Mammary epithelial cell (primary cell): ENCODE measurements at regions of chr18 and their contacts with region 1.

Region 1: DNA sequence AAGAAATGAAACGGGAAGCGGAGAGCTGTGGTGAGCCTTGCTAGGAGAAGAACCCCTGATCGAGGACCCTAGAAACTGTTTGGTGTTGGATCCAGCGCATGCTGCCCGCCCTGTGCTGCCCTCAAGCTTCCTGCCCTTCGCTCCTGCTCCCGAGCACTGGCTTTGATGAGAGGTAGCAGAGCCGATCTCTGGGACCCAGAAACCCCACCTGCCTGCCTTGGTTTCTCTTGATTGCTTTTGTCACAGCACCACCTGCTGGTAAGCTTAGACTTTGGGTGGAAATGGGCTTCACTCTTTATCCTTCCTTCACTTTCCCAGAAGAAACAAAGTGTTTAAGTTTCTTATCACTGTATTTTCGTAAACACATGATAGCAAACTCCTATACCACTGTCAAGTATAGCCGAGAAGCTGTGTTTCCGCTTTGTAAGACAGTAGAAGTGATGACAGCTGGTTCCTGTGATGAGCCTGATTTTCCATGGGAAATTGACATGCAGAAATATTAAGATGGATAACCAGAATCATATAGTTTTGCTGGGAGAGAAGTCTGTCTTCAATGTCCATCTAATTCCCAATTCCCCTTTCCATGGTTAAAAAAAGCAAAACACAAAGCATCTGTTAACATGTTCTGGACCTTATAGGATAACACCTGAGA is 267.4 kb downstream of the PHLPP1 start:
- DNase-seq: peak; percentile 28
- H3K4me3 ChIP-seq: no peak overlapping the region
- H3K27ac ChIP-seq: no peak overlapping the region
- H3K4me1 ChIP-seq: no peaks in the 10 kb centered on the region
- H3K27me3 ChIP-seq: no peaks in the 10 kb centered on the region
- CTCF ChIP-seq: peak; percentile 65 to 79

Region 2: GRCh38 chr18:62186774-62187542 is 795.8 kb before region 1 on chr18 and contains the starts of genes PIGN and RELCH:
- CTCF ChIA-PET with region 1: no interaction called
- dilution Hi-C with region 1: no loop called
- in situ Hi-C with region 1: no loop called
- intact Hi-C with region 1: loop called (anchors 2 kb)
- DNase-seq: peak; percentile 99
- H3K4me3 ChIP-seq: peak within 1 kb of the TSS; percentile 73 to 98 (median 80)
- H3K27ac ChIP-seq: peak within 1 kb of the TSS; percentile 68
- H3K4me1 ChIP-seq: no peaks in the 10 kb centered on the region
- H3K27me3 ChIP-seq: no peaks in the 10 kb centered on the region
- CTCF ChIP-seq: no peak
- total RNA-seq, gene PIGN: 46.3 to 49.5 TPM
- total RNA-seq, gene RELCH: 24.6 to 36.5 TPM

Region 3: GRCh38 chr18:62324917-62325805 is 657.6 kb before region 1 on chr18 and contains the start of gene TNFRSF11A:
- CTCF ChIA-PET with region 1: no interaction called
- dilution Hi-C with region 1: no loop called
- in situ Hi-C with region 1: no loop called
- intact Hi-C with region 1: loop called (anchors 10 kb)
- DNase-seq: peak; percentile 58
- H3K4me3 ChIP-seq: peak within 1 kb of the TSS; percentile 54 to 71 (median 64)
- H3K27ac ChIP-seq: no peak within 1 kb of the TSS
- H3K4me1 ChIP-seq: peaks cover 14% of the 10 kb centered on the region
- H3K27me3 ChIP-seq: peaks cover 3% of the 10 kb centered on the region
- CTCF ChIP-seq: peak; percentile 7 to 47
- total RNA-seq, gene TNFRSF11A: 0.50 to 6.1 TPM

Region 4: GRCh38 chr18:62425465-62426195 is 557.1 kb before region 1 on chr18:
- CTCF ChIA-PET with region 1: no interaction called
- dilution Hi-C with region 1: no loop called
- in situ Hi-C with region 1: no loop called
- intact Hi-C with region 1: loop called (anchors 5 kb)
- DNase-seq: peak; percentile 93
- H3K4me3 ChIP-seq: peak overlapping the region in 2 of 3 experiments; percentile 1 to 9
- H3K27ac ChIP-seq: peak overlapping the region; percentile 41
- H3K4me1 ChIP-seq: peaks cover 12% of the 10 kb centered on the region
- H3K27me3 ChIP-seq: no peaks in the 10 kb centered on the region
- CTCF ChIP-seq: peak; percentile 83 to 91

Region 5: GRCh38 chr18:62596145-62597005 is 386.4 kb before region 1 on chr18:
- CTCF ChIA-PET with region 1: no interaction called
- dilution Hi-C with region 1: no loop called
- in situ Hi-C with region 1: loop called (anchors 10 kb)
- intact Hi-C with region 1: no loop called
- DNase-seq: peak; percentile 20
- H3K4me3 ChIP-seq: peak overlapping the region; percentile 30 to 37 (median 32)
- H3K27ac ChIP-seq: no peak overlapping the region
- H3K4me1 ChIP-seq: peaks cover 8% of the 10 kb centered on the region
- H3K27me3 ChIP-seq: peaks cover 14% of the 10 kb centered on the region
- CTCF ChIP-seq: no peak

Region 6: GRCh38 chr18:62637807-62638687 is 344.7 kb before region 1 on chr18:
- CTCF ChIA-PET with region 1: no interaction called
- dilution Hi-C with region 1: no loop called
- in situ Hi-C with region 1: no loop called
- intact Hi-C with region 1: loop called (anchors 1 kb)
- DNase-seq: peak; percentile 9
- H3K4me3 ChIP-seq: no peak overlapping the region
- H3K27ac ChIP-seq: no peak overlapping the region
- H3K4me1 ChIP-seq: peaks cover 18% of the 10 kb centered on the region
- H3K27me3 ChIP-seq: no peaks in the 10 kb centered on the region
- CTCF ChIP-seq: peak; percentile 67 to 70

Region 7: GRCh38 chr18:62702253-62702652 is 280.5 kb before region 1 on chr18:
- CTCF ChIA-PET with region 1: no interaction called
- dilution Hi-C with region 1: no loop called
- in situ Hi-C with region 1: loop called in 1 of 2 experiments (anchors 10 kb)
- intact Hi-C with region 1: no loop called
- DNase-seq: no peak
- H3K4me3 ChIP-seq: no peak overlapping the region
- H3K27ac ChIP-seq: no peak overlapping the region
- H3K4me1 ChIP-seq: no peaks in the 10 kb centered on the region
- H3K27me3 ChIP-seq: peaks cover 2% of the 10 kb centered on the region
- CTCF ChIP-seq: no peak

Region 8: DNA sequence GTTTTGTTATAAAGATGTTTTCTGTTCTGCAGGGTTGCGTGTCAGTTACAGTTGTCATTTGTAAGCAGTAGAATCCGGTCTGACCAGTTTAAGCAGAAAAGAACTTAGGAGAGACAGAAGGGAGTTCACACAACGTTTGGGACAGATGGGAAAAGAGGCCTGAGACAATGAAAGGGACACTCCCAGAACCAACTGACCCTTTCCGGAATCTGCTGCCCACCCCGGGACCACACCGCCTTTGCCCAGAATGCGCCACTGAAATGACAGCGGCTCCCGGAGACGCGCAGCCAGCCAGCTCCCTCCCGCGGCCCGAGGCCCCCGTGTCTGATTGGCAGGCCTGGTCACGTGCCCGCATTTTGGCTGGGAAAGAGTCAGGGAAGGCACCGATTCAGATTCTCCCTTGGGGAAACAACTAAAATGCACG is 92.3 kb after region 1 on chr18:
- CTCF ChIA-PET with region 1: no interaction called
- dilution Hi-C with region 1: no loop called
- in situ Hi-C with region 1: no loop called
- intact Hi-C with region 1: no loop called
- DNase-seq: peak; percentile 46
- H3K4me3 ChIP-seq: peak overlapping the region; percentile 56 to 62 (median 60)
- H3K27ac ChIP-seq: no peak overlapping the region
- H3K4me1 ChIP-seq: peaks cover 14% of the 10 kb centered on the region
- H3K27me3 ChIP-seq: no peaks in the 10 kb centered on the region
- CTCF ChIP-seq: no peak